SK-N-SH (cell line): ENCODE measurements at regions of chr10 and their contacts with region 1.

Region 1: GRCh38 chr10:75235375-75236177 is at the start of gene COMTD1:
- DNase-seq: peak; percentile 95
- H3K4me3 ChIP-seq: peak within 1 kb of the TSS; percentile 61 to 72
- H3K27ac ChIP-seq: peak within 1 kb of the TSS in 1 of 2 experiments; percentile 73; a peak in 1 of 4 replicates
- H3K4me1 ChIP-seq: peaks cover 0 to 37% of the 10 kb centered on the region in 2 experiments; a peak in 1 of 4 replicates
- H3K27me3 ChIP-seq: no peaks in the 10 kb centered on the region
- CTCF ChIP-seq: peak; percentile 98
- EP300 ChIP-seq: no peak
- RAD21 ChIP-seq: peak; percentile 95
- polyA plus RNA-seq, gene COMTD1: 7.6 and 8.0 TPM in 2 replicates

Region 2: GRCh38 chr10:74244097-74244685 is 991.4 kb before region 1 on chr10:
- CTCF ChIA-PET with region 1: interaction called, 29 read pairs
- POLR2A ChIA-PET with region 1: no interaction called
- DNase-seq: peak; percentile 11
- H3K4me3 ChIP-seq: no peak overlapping the region
- H3K27ac ChIP-seq: no peak overlapping the region
- H3K4me1 ChIP-seq: peaks cover 3 to 10% of the 10 kb centered on the region in 2 experiments
- H3K27me3 ChIP-seq: no peaks in the 10 kb centered on the region
- CTCF ChIP-seq: peak; percentile 74
- EP300 ChIP-seq: no peak
- RAD21 ChIP-seq: peak; percentile 78

Region 3: GRCh38 chr10:75111367-75111906 is 124.1 kb before region 1 on chr10 and contains the start of gene SAMD8:
- CTCF ChIA-PET with region 1: interaction called, 33 read pairs
- POLR2A ChIA-PET with region 1: interaction called, 3 read pairs
- DNase-seq: peak; percentile 99
- H3K4me3 ChIP-seq: peak within 1 kb of the TSS; percentile 75 to 96
- H3K27ac ChIP-seq: peak within 1 kb of the TSS; percentile 91 to 97
- H3K4me1 ChIP-seq: peaks cover 5 to 8% of the 10 kb centered on the region in 2 experiments; a peak in 3 of 4 replicates
- H3K27me3 ChIP-seq: no peaks in the 10 kb centered on the region
- CTCF ChIP-seq: no peak; the same call in none of the 2 replicates
- EP300 ChIP-seq: no peak
- RAD21 ChIP-seq: no peak
- polyA plus RNA-seq, gene SAMD8: 9.7 and 14.3 TPM in 2 replicates

Region 4: DNA sequence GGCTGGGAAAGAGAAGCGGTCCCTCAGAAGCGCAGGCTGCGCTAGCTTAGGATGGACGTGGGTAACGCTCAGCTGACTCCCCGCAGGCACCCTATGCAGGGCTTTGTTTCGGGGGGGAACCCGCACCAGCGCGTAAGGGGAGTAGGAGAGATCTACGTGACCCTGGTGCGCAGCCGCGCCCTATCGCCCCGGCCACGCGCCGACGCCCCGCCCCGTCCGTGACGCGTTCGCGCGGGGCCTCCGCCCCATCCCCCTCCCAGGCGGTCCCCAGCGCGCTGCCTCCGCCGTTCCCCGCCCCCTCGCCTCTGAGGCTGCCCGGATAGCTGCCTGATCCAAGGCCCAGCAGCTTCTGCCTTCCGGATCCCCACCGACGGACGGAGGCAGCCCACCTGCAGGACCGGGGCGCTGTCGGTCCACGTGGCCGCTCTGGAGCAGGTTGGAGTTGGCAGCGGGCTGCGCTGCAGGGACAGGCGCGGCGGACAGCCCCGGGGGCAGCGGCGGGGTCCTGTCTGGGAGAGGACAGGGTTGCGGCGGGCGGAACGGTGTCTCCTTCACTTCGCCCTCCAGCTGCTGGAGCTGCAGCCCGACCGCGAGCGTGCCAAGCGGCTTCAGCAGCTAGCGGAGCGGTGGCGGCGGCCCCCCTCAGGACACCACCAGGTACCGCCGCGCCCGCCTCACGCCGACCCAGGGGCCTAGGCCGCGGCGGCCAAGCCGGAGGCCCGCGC is 25.1 kb before region 1 on chr10 and contains the start of gene VDAC2:
- CTCF ChIA-PET with region 1: interaction called, 36 read pairs
- POLR2A ChIA-PET with region 1: interaction called, 6 read pairs
- DNase-seq: peak; percentile 99
- H3K4me3 ChIP-seq: peak within 1 kb of the TSS; percentile 84 to 93
- H3K27ac ChIP-seq: peak within 1 kb of the TSS; percentile 96 to 98
- H3K4me1 ChIP-seq: peaks cover 13 to 15% of the 10 kb centered on the region in 2 experiments; a peak in 3 of 4 replicates
- H3K27me3 ChIP-seq: no peaks in the 10 kb centered on the region
- CTCF ChIP-seq: no peak
- EP300 ChIP-seq: no peak; a peak in 1 of 4 replicates
- RAD21 ChIP-seq: no peak
- polyA plus RNA-seq, gene VDAC2: 98.3 and 101 TPM in 2 replicates

Region 5: GRCh38 chr10:75294866-75295701 is 59.5 kb after region 1 on chr10:
- CTCF ChIA-PET with region 1: interaction called, 11 read pairs
- POLR2A ChIA-PET with region 1: no interaction called
- DNase-seq: peak; percentile 85
- H3K4me3 ChIP-seq: peak overlapping the region; percentile 56 to 65
- H3K27ac ChIP-seq: peak overlapping the region; percentile 39 to 60; a peak in 3 of 4 replicates
- H3K4me1 ChIP-seq: peaks cover 5 to 19% of the 10 kb centered on the region in 2 experiments; a peak in 3 of 4 replicates
- H3K27me3 ChIP-seq: no peaks in the 10 kb centered on the region
- CTCF ChIP-seq: peak; percentile 19
- EP300 ChIP-seq: peak in 1 of 2 experiments; percentile 42; a peak in 2 of 4 replicates
- RAD21 ChIP-seq: 0 out of 2 replicates have a peak, but pooled peaks have one; percentile 19